ENCODE measurements at regions of chrX and their contacts with region 1.

Region 1: DNA sequence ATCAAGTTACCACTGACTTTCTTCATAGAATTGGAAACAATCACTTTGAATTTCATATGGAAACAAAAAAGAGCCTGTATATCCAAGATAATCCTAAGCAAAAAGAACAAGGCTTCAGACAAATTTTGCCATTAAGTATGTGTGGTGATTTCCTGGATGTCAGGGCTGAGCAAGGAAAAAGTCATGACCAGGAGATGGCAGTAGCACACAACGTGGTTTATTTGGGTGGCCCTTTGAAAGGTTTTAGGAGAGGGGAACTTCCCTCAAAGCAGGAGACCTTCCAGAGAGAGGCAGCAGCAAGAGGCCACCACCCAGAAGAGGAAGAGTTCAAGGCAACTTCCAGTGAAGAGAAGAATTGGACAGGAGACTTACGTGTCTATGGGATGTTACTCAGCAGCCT is 18.1 kb upstream of the ZXDB start:
- DNase-seq: peak; percentile 29
- ATAC-seq: peak; percentile 47
- H3K4me3 Mint-ChIP-seq: no peak overlapping the region
- H3K27ac Mint-ChIP-seq: no peak overlapping the region
- H3K4me1 Mint-ChIP-seq: peaks cover 2% of the 10 kb centered on the region
- H3K27me3 Mint-ChIP-seq: no peaks in the 10 kb centered on the region

Region 2: DNA sequence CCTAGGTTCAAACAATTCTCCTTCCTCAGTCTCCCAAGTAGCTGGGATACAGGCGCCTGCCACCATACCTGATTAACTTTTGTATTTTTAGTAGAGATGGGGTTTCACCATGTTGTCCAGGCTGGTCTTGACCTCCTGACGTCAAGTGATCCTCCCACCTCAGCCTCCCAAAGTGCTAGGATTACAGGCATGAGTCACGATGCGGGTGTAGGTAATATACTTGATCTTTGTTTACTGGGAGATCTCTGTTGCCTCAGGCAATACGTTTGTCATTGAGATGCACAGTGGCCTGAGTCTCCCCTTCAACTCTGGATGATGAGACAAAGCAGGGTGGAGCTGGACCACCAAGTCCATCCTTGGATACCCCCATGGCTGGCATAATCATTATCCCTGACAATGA is 533.7 kb before region 1 on chrX:
- CTCF ChIA-PET with region 1: no interaction called
- POLR2A ChIA-PET with region 1: no interaction called
- intact Hi-C with region 1: no loop called
- DNase-seq: no peak
- ATAC-seq: no peak
- H3K4me3 Mint-ChIP-seq: no peak overlapping the region
- H3K27ac Mint-ChIP-seq: no peak overlapping the region
- H3K4me1 Mint-ChIP-seq: no peaks in the 10 kb centered on the region
- H3K27me3 Mint-ChIP-seq: peaks cover 2% of the 10 kb centered on the region

Region 3: DNA sequence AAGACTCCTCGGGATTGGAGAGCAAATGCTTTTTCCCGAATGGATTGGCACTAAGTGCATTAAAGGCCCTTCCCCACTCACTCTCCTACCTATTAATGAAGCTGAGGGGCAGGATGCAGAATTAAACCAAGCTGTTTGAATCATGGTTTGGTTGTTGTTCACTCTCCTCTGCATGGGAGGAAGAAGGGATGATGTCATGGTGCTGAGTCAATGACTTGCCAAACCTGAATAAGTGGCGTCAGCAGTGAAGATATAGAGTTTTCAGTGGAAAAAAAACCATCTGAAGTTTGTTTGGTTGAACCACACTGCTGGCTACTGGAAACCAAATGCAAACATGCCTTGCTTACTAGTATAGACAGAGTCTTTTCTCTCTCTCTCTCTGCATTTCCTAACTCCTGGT is 356.3 kb after region 1 on chrX:
- CTCF ChIA-PET with region 1: no interaction called
- POLR2A ChIA-PET with region 1: no interaction called
- intact Hi-C with region 1: loop called in 1 of 2 experiments (anchors 10 kb)
- DNase-seq: no peak
- ATAC-seq: peak; percentile 69
- H3K4me3 Mint-ChIP-seq: no peak overlapping the region
- H3K27ac Mint-ChIP-seq: no peak overlapping the region
- H3K4me1 Mint-ChIP-seq: peaks cover 4% of the 10 kb centered on the region
- H3K27me3 Mint-ChIP-seq: no peaks in the 10 kb centered on the region

Region 4: DNA sequence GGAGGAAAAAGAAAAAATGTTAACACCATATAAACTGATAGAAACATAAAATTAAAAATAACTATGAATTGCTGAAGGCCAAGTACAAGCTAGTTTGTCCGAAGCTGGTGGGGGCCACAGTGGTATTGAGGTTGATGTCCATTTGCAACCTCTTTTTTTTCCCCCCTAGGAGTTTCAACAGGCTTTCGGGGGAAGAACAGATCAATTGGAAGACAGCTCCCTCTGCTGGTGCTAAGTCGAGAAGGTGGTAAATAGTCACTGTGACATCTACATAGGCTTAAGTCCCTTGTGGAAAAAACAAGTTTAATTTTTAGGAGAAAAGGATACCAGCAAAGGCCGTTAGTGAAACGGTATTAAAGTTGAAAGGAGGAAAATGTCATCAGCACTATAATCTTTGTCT is 452.2 kb after region 1 on chrX:
- CTCF ChIA-PET with region 1: no interaction called
- POLR2A ChIA-PET with region 1: no interaction called
- intact Hi-C with region 1: loop called in 1 of 2 experiments (anchors 5 kb)
- DNase-seq: peak; percentile 37
- ATAC-seq: no peak
- H3K4me3 Mint-ChIP-seq: no peak overlapping the region
- H3K27ac Mint-ChIP-seq: no peak overlapping the region
- H3K4me1 Mint-ChIP-seq: peaks cover 8% of the 10 kb centered on the region
- H3K27me3 Mint-ChIP-seq: no peaks in the 10 kb centered on the region